MCF 10A (cell line): ENCODE measurements at regions of chr4 and their contacts with region 1.

Region 1: GRCh38 chr4:94548571-94548970 is 96.8 kb downstream of the PDLIM5 start:
- DNase-seq: peak; percentile 76
- H3K4me3 Mint-ChIP-seq: peak overlapping the region; percentile 37
- H3K27ac Mint-ChIP-seq: peak overlapping the region; percentile 91
- H3K4me1 Mint-ChIP-seq: peaks cover 32% of the 10 kb centered on the region
- H3K27me3 Mint-ChIP-seq: no peaks in the 10 kb centered on the region
- CTCF ChIP-seq: no peak

Region 2: DNA sequence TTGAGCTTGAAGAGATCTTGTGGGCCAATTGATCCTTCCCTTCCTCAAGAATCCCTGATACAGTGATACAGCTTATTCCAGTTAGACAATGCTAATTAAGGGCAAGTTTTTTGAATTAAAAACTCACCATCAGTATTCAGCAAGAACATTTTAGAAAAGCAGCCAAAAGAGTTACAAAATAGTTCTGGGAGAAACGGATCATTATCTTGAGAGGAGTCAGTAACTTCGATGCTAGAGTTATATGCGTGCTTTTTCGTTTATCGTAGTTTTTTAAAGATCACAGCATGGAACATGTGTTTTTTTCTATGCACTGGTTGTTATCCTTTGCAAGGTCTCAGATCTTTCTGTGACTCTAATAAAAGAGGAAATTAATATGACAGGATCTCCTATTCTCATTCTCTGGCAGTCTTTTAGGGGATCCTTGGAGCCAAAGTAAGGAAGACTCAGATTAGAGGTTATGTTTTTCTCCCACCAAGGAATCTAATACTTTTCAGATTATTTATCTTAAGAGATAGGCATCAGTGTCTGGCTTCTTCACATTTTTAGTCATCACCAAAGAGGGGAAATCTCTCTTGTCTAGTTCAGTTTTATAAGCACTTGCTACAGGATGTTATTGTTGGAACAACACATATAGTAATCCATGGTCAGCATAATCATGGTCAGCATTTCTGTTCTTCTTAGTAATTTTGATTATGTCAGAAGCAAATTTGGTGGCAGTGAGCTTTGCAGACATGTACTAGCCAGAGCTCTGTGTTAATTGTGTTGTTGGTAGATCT is 12.9 kb after region 1 on chr4:
- CTCF ChIA-PET with region 1: interaction called, 5 read pairs
- POLR2A ChIA-PET with region 1: interaction called, 23 read pairs
- intact Hi-C with region 1: no loop called
- DNase-seq: peak; percentile 48
- H3K4me3 Mint-ChIP-seq: no peak overlapping the region
- H3K27ac Mint-ChIP-seq: peak overlapping the region; percentile 13
- H3K4me1 Mint-ChIP-seq: peaks cover 26% of the 10 kb centered on the region
- H3K27me3 Mint-ChIP-seq: no peaks in the 10 kb centered on the region
- CTCF ChIP-seq: no peak

Region 3: GRCh38 chr4:94577136-94577535 is 28.6 kb after region 1 on chr4:
- CTCF ChIA-PET with region 1: no interaction called
- POLR2A ChIA-PET with region 1: no interaction called
- intact Hi-C with region 1: no loop called
- DNase-seq: peak; percentile 28
- H3K4me3 Mint-ChIP-seq: no peak overlapping the region
- H3K27ac Mint-ChIP-seq: no peak overlapping the region
- H3K4me1 Mint-ChIP-seq: no peaks in the 10 kb centered on the region
- H3K27me3 Mint-ChIP-seq: no peaks in the 10 kb centered on the region
- CTCF ChIP-seq: no peak